IMR-90 (cell line): ENCODE measurements at regions of chr16 and their contacts with region 1.

Region 1: GRCh38 chr16:51747329-51747728 is 596.3 kb upstream of the SALL1 start:
- DNase-seq: no peak
- ATAC-seq: no peak
- H3K4me3 ChIP-seq: no peak overlapping the region
- H3K27ac ChIP-seq: no peak overlapping the region
- H3K4me1 ChIP-seq: no peaks in the 10 kb centered on the region
- H3K27me3 ChIP-seq: no peaks in the 10 kb centered on the region; the same call in 1 of the 2 replicates
- CTCF ChIP-seq: no peak
- POLR2A ChIP-seq: no peak
- RAD21 ChIP-seq: no peak

Region 2: GRCh38 chr16:51473091-51473490 is 274.2 kb before region 1 on chr16:
- CTCF ChIA-PET with region 1: no interaction called
- POLR2A ChIA-PET with region 1: no interaction called
- dilution Hi-C with region 1: no loop called
- in situ Hi-C with region 1: no loop called
- intact Hi-C with region 1: no loop called
- DNase-seq: no peak
- ATAC-seq: no peak
- H3K4me3 ChIP-seq: no peak overlapping the region
- H3K27ac ChIP-seq: no peak overlapping the region
- H3K4me1 ChIP-seq: no peaks in the 10 kb centered on the region
- H3K27me3 ChIP-seq: no peaks in the 10 kb centered on the region
- CTCF ChIP-seq: no peak
- POLR2A ChIP-seq: no peak
- RAD21 ChIP-seq: no peak

Region 3: DNA sequence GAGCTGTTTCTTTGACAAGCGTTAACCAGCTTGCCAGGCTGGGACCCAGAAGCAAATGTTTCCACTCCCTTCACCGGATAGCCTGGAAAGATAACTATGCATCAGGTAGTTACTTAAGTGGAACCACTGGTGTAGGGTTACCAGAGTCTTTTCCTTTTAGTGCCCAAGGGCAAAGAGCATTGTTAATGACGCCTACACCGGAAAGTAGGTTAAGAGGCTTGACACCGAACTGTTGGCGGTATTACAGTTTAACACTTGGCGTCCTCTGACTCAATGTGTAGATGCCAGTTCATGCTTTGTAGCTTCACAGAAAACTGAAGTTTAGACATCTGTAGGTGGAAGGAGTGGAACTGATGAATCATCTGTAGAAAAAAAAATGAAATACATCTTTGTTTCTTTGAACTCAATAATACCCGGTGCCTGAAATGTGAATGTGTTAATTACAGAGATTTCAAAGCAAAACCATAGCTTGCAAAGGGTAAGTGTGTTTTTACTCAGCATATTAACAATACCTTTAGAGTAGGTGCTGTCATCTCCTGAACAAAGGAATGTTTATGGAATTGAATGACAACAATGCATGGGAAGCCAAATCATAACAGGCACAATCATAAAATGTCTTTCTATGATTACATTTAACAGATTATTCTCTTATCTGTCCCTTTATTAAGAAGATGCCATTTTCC is 169.6 kb before region 1 on chr16:
- CTCF ChIA-PET with region 1: no interaction called
- POLR2A ChIA-PET with region 1: no interaction called
- dilution Hi-C with region 1: no loop called
- in situ Hi-C with region 1: no loop called
- intact Hi-C with region 1: loop called (anchors 10 kb)
- DNase-seq: peak; percentile 15
- ATAC-seq: no peak
- H3K4me3 ChIP-seq: no peak overlapping the region
- H3K27ac ChIP-seq: no peak overlapping the region
- H3K4me1 ChIP-seq: no peaks in the 10 kb centered on the region
- H3K27me3 ChIP-seq: peaks cover 10% of the 10 kb centered on the region
- CTCF ChIP-seq: no peak
- POLR2A ChIP-seq: no peak
- RAD21 ChIP-seq: no peak

Region 4: GRCh38 chr16:51982715-51983680 is 235.7 kb after region 1 on chr16:
- CTCF ChIA-PET with region 1: no interaction called
- POLR2A ChIA-PET with region 1: no interaction called
- dilution Hi-C with region 1: no loop called
- in situ Hi-C with region 1: no loop called
- intact Hi-C with region 1: no loop called
- DNase-seq: peak; percentile 78
- ATAC-seq: peak; percentile 72
- H3K4me3 ChIP-seq: no peak overlapping the region
- H3K27ac ChIP-seq: no peak overlapping the region
- H3K4me1 ChIP-seq: no peaks in the 10 kb centered on the region; the same call in 1 of the 2 replicates
- H3K27me3 ChIP-seq: no peaks in the 10 kb centered on the region
- CTCF ChIP-seq: peak; percentile 90
- POLR2A ChIP-seq: no peak
- RAD21 ChIP-seq: peak; percentile 96